HepG2 (cell line): ENCODE measurements at regions of chr3 and their contacts with region 1.

Region 1: DNA sequence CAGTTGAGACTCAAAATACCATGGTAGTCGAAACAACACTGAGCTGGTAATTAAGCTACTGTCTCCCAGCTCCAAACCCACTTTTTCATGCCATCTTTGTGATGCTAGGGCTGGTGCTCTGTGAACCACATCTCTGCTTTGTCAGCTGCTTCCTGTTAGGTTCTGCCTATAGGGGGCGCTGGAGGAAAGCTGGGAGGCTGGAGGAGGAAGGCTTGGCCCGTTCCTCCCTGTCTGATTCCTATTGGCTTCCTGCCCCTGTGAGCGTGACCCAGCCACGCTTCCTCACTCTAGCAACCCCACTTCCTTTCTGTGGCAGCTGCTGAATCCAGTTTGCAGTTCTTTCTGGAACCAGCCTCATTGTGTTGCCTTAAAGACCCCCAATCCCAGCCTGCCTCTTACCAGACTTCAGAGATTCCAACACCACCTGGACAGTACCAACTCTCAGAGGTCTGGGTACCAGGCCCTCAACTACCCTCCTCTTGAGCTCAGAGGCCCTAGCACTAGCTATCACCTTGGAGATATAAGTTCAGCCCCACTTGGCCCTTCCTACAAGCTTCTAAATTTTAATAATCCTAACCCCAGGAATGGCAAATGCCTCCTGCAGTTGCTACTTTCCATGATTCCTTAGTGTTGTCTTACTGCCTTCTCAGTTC is 120.9 kb downstream of the ERC2 start:
- DNase-seq: no peak
- ATAC-seq: no peak
- H3K4me3 ChIP-seq: no peak overlapping the region
- H3K27ac ChIP-seq: no peak overlapping the region
- H3K4me1 ChIP-seq: no peaks in the 10 kb centered on the region
- H3K27me3 ChIP-seq: no peaks in the 10 kb centered on the region
- CTCF ChIP-seq: peak; percentile 44
- EP300 ChIP-seq: no peak
- POLR2A ChIP-seq: no peak
- RAD21 ChIP-seq: no peak

Region 2: DNA sequence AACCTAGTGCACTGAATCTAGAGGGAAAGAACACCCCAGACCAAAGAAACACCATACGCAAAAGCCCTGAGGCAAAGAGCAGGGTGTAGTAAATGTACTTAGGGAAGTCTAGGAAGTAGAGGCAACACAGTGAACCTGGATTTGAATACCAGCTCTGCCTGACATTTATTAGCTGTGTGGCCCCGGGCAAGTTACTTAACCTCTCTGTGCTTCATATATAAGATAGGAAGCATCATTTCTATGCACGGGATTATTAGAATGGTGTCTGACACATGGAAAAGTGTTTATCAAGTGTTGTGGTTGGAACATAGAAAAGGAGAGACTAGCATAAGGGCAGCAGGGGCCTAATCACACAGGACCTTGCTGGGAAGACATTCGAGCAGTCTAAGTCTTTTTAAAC is 11.3 kb before region 1 on chr3:
- CTCF ChIA-PET with region 1: no interaction called
- POLR2A ChIA-PET with region 1: no interaction called
- in situ Hi-C with region 1: no loop called
- intact Hi-C with region 1: no loop called
- DNase-seq: no peak
- ATAC-seq: no peak
- H3K4me3 ChIP-seq: no peak overlapping the region
- H3K27ac ChIP-seq: no peak overlapping the region
- H3K4me1 ChIP-seq: no peaks in the 10 kb centered on the region
- H3K27me3 ChIP-seq: no peaks in the 10 kb centered on the region; a peak in 1 of 5 replicates
- CTCF ChIP-seq: no peak
- EP300 ChIP-seq: no peak
- POLR2A ChIP-seq: no peak
- RAD21 ChIP-seq: no peak

Region 3: DNA sequence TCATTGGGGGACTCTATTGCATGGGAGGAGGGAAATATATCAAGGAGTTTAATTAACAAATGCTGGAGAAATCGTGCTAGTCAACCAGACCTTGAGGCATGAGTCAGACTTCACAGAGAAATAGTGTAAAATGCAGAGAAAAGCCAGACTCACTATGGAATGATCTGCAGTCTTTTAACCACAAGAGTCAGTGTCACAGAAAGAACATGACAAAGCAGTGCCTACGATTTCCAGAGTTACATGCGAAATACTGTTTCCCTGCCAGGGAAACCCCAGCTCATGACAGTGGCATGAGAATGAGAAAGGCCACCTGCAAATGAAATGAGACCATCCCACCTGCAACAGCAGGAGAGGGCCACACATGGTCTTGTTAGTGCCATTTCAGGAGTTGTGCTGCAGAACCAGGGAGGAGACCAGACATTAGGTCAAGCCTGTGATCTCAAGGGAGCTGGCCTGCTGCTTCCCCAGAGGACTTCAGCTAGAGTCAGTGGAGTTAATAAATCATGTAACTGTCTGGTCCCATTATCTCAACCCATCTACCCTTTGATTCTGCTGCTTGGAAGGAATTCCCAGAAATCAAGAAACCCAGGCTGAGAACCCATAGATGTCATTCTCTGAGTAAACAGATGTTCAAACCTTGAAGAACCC is 42.0 kb after region 1 on chr3:
- CTCF ChIA-PET with region 1: no interaction called
- POLR2A ChIA-PET with region 1: no interaction called
- in situ Hi-C with region 1: no loop called
- intact Hi-C with region 1: no loop called
- DNase-seq: no peak
- ATAC-seq: no peak
- H3K4me3 ChIP-seq: no peak overlapping the region
- H3K27ac ChIP-seq: no peak overlapping the region
- H3K4me1 ChIP-seq: no peaks in the 10 kb centered on the region
- H3K27me3 ChIP-seq: no peaks in the 10 kb centered on the region
- CTCF ChIP-seq: no peak
- EP300 ChIP-seq: no peak
- POLR2A ChIP-seq: no peak
- RAD21 ChIP-seq: no peak

Region 4: DNA sequence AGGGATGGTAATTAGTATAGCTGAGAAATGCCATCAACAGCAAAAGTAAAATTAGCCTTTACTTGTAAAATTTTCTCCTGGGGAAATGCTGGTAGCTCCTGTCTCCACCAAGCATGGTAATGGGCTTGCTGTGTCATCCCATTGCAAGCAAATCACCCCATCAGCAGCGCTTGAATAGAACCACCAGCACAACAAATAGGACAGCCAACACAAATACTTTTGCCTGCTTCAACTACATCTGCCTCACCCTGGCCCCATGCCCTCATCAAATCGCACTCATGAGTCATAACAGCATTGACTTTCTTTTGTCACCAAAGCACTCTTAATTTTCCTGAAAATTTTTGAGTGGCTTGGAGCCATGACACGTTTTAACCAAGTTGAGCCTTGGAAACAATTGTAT is 68.3 kb after region 1 on chr3:
- CTCF ChIA-PET with region 1: no interaction called
- POLR2A ChIA-PET with region 1: no interaction called
- in situ Hi-C with region 1: no loop called
- intact Hi-C with region 1: no loop called
- DNase-seq: no peak
- ATAC-seq: no peak
- H3K4me3 ChIP-seq: no peak overlapping the region
- H3K27ac ChIP-seq: no peak overlapping the region
- H3K4me1 ChIP-seq: no peaks in the 10 kb centered on the region
- H3K27me3 ChIP-seq: peaks cover 0 to 1% of the 10 kb centered on the region in 2 experiments; a peak in 2 of 5 replicates
- CTCF ChIP-seq: no peak
- EP300 ChIP-seq: no peak
- POLR2A ChIP-seq: no peak
- RAD21 ChIP-seq: no peak

Region 5: GRCh38 chr3:56443372-56443771 is 96.0 kb after region 1 on chr3:
- CTCF ChIA-PET with region 1: no interaction called
- POLR2A ChIA-PET with region 1: no interaction called
- in situ Hi-C with region 1: loop called (anchors 10 kb)
- intact Hi-C with region 1: no loop called
- DNase-seq: no peak
- ATAC-seq: no peak
- H3K4me3 ChIP-seq: no peak overlapping the region
- H3K27ac ChIP-seq: no peak overlapping the region
- H3K4me1 ChIP-seq: no peaks in the 10 kb centered on the region
- H3K27me3 ChIP-seq: 0 out of 5 replicates have a peak, but pooled peaks cover 0 to 5% of the 10 kb centered on the region in 2 experiments
- CTCF ChIP-seq: no peak
- EP300 ChIP-seq: no peak
- POLR2A ChIP-seq: no peak
- RAD21 ChIP-seq: no peak

Region 6: DNA sequence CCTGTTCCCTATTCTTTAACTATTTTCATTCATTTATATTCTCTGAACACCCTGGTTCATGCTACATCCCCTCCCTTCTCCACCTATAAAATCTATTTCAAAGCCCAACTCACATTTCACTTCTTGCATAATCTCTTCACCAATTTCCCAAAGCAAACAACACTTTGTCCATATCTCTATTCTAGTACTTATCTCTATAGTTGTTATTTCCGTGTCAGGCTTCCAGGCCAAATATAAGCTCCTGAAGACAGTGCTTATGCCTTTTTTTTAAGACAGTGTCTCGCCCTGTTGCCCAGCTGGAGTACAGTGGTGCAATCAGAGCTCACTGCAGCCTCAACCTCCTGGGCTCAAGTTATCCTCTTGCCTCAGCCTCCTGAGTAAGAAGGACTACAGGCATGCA is 1153.2 kb after region 1 on chr3:
- CTCF ChIA-PET with region 1: no interaction called
- POLR2A ChIA-PET with region 1: no interaction called
- in situ Hi-C with region 1: no loop called
- intact Hi-C with region 1: loop called (anchors 10 kb)
- DNase-seq: peak; percentile 64
- ATAC-seq: peak; percentile 56
- H3K4me3 ChIP-seq: no peak overlapping the region
- H3K27ac ChIP-seq: no peak overlapping the region
- H3K4me1 ChIP-seq: peaks cover 13% of the 10 kb centered on the region
- H3K27me3 ChIP-seq: no peaks in the 10 kb centered on the region
- CTCF ChIP-seq: no peak
- EP300 ChIP-seq: peak in 1 of 2 experiments; percentile 53; a peak in 1 of 4 replicates
- POLR2A ChIP-seq: no peak
- RAD21 ChIP-seq: no peak